Tibial artery (tissue), 4 donors: ENCODE measurements at regions of chr2 and their contacts with region 1.

Region 1: DNA sequence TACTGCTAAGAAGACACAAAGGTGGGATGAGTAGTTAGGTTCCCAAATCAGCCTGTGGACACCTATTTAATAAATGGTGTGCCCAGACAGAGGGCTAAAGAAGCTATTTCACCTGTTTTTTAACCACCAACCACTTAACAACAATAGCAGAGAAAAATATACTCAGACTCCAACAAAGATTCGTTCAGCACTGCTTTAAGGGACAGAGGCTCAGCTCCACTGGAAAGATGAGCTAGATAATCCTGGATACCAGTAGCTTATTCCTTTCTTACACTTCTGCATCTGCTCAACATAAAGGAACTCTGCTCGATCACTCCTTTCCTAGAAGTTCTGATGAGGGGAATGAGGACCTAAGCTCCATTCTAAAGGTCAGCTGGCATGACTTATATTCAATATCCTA is 44.5 kb downstream of the PTCD3 start:
- DNase-seq: no peak
- H3K4me3 ChIP-seq: no peak overlapping the region
- H3K27ac ChIP-seq: no peak overlapping the region
- H3K4me1 ChIP-seq: no peaks in the 10 kb centered on the region
- H3K27me3 ChIP-seq: no peaks in the 10 kb centered on the region
- CTCF ChIP-seq: no peak

Region 2: DNA sequence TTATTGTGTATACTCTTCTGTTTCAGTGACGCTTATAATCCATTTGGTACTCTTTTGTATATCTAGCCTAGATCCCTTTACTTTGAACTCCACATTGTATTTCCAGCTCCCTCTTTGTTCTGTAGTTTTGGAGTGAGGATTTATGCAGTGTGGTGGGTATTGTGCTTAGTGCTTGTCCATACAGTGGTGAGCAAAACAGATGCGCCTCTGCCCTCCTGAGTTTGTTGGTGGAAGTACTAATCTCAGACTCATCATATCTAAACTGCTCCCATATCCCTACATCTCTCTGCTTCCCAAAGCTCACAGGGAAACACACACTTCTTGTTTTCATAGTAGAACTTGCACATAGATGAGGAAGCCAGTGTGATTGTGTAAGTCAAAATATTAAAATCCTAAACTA is 32.4 kb before region 1 on chr2:
- intact Hi-C with region 1: loop called (anchors 2 kb)
- DNase-seq: no peak
- H3K4me3 ChIP-seq: no peak overlapping the region
- H3K27ac ChIP-seq: no peak overlapping the region
- H3K4me1 ChIP-seq: peaks cover 0 to 13% (median 0%) of the 10 kb centered on the region in 4 donors
- H3K27me3 ChIP-seq: no peaks in the 10 kb centered on the region
- CTCF ChIP-seq: no peak